ENCODE measurements at regions of chr5 and their contacts with region 1.

Region 1: GRCh38 chr5:15929611-15930263 is 249.9 kb downstream of the MARCHF11 start:
- DNase-seq: peak; percentile 90
- ATAC-seq: peak; percentile 87
- H3K4me3 ChIP-seq: peak overlapping the region; percentile 13
- H3K27ac ChIP-seq: peak overlapping the region; percentile 33; the same call in 1 of the 2 replicates
- H3K4me1 ChIP-seq: peaks cover 15% of the 10 kb centered on the region
- H3K27me3 ChIP-seq: no peaks in the 10 kb centered on the region
- CTCF ChIP-seq: no peak
- POLR2A ChIP-seq: no peak
- RAD21 ChIP-seq: no peak

Region 2: DNA sequence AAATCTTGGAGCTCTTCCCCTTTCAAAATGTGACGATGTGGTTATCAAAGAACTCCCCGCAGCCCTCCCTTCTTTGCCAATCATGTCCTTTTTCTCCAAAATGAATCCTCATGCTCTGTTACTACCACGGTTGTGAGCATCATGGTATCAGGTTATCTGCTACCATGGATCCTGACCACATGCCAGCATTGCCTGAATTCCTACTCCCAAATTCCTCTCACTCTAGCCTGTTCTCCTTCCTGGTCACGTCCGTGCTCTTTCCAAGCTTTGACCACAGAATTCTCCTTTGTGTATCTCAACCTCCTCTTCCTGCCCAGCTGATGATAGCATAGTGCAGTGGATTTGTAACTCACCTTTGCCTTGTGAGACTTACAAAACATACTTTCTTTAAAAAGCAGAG is 489.3 kb before region 1 on chr5:
- CTCF ChIA-PET with region 1: no interaction called
- POLR2A ChIA-PET with region 1: no interaction called
- dilution Hi-C with region 1: no loop called
- in situ Hi-C with region 1: no loop called
- intact Hi-C with region 1: no loop called
- DNase-seq: no peak
- ATAC-seq: no peak
- H3K4me3 ChIP-seq: no peak overlapping the region
- H3K27ac ChIP-seq: no peak overlapping the region
- H3K4me1 ChIP-seq: no peaks in the 10 kb centered on the region
- H3K27me3 ChIP-seq: peaks cover 4% of the 10 kb centered on the region
- CTCF ChIP-seq: no peak
- POLR2A ChIP-seq: no peak
- RAD21 ChIP-seq: no peak

Region 3: DNA sequence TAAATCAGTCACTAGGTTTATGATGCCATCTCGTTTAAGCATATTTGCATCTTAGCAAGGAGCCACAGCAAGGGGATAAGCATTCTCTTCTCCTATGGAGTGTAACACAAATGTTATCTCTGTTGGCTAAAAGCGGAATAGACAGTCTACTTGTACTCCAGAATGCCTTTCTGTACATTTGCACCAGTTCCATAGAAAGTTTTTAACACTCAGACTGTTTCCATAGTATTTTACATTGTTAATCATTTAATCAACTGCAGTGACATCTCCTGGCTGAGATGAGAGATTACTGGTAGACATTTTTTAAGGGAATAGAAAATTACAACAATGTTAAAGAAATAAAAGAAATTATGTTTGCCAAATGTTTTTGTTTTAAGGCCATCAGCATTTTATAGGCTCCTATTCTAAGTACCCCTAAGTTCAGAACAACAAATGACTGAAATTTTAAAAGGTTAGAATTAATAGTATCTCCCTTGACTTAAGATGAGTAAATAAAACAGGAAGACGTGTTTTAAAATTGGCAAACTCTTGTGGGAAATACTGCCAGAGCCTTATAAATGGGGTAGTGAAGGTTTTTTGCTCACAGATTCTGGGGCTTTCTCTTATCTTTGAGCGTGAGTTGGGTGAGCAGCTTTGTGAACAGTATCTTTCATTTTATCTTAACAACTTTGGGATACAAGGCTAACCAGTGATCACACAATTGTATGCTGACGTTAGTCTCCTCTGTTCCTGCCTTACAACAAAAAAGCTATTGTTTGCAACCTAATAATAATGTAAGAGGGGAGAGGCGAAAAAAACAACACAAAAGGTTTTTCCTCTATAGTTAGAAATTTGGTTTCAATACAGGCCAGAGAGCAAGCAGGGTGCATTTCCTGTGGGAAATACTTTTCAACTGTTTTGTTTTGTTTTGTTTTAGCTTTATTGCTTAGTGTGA is 135.4 kb before region 1 on chr5:
- CTCF ChIA-PET with region 1: no interaction called
- POLR2A ChIA-PET with region 1: no interaction called
- dilution Hi-C with region 1: no loop called
- in situ Hi-C with region 1: no loop called
- intact Hi-C with region 1: no loop called
- DNase-seq: peak; percentile 24
- ATAC-seq: no peak
- H3K4me3 ChIP-seq: no peak overlapping the region
- H3K27ac ChIP-seq: no peak overlapping the region
- H3K4me1 ChIP-seq: peaks cover 3% of the 10 kb centered on the region
- H3K27me3 ChIP-seq: no peaks in the 10 kb centered on the region
- CTCF ChIP-seq: peak; percentile 44
- POLR2A ChIP-seq: no peak
- RAD21 ChIP-seq: peak; percentile 45

Region 4: DNA sequence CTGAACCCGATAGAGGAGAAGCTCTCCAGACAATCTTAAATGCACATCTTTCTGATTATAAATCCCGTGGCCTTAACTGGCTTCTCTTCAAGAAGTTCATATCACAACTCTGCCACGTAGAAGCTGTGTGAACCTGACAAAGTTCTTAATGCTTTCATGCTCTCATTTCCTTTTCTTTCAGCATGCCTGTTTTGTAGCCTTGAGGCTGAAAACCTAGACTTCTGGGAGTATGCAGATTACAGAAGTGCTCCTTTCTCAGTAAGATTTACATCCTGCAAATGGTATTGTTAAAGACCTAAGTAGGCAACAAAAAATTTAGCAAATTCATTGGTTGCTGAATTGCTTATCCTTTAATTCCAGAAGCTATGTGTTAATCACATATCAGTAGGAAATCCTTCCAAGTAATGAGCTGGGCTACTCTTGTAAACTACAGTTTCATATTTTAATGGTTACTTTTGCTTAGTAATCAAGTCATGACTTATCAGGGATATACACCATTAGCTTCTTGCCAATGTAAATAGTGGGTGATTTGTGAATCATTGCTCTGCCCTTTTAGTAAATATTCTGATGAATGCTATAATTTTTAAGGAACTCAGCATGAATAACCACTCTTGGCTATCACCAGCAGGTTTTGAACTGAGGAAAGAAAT is 95.0 kb before region 1 on chr5:
- CTCF ChIA-PET with region 1: no interaction called
- POLR2A ChIA-PET with region 1: no interaction called
- dilution Hi-C with region 1: no loop called
- in situ Hi-C with region 1: no loop called
- intact Hi-C with region 1: loop called (anchors 2 kb)
- DNase-seq: peak; percentile 91
- ATAC-seq: peak; percentile 85
- H3K4me3 ChIP-seq: no peak overlapping the region
- H3K27ac ChIP-seq: peak overlapping the region; percentile 37; the same call in 1 of the 2 replicates
- H3K4me1 ChIP-seq: peaks cover 7% of the 10 kb centered on the region
- H3K27me3 ChIP-seq: no peaks in the 10 kb centered on the region
- CTCF ChIP-seq: no peak
- POLR2A ChIP-seq: no peak
- RAD21 ChIP-seq: no peak

Region 5: GRCh38 chr5:15904899-15905830 is 24.6 kb before region 1 on chr5:
- CTCF ChIA-PET with region 1: no interaction called
- POLR2A ChIA-PET with region 1: no interaction called
- dilution Hi-C with region 1: no loop called
- in situ Hi-C with region 1: no loop called
- intact Hi-C with region 1: no loop called
- DNase-seq: no peak
- ATAC-seq: peak; percentile 64
- H3K4me3 ChIP-seq: no peak overlapping the region
- H3K27ac ChIP-seq: no peak overlapping the region
- H3K4me1 ChIP-seq: peaks cover 1% of the 10 kb centered on the region; the same call in 1 of the 2 replicates
- H3K27me3 ChIP-seq: no peaks in the 10 kb centered on the region
- CTCF ChIP-seq: no peak
- POLR2A ChIP-seq: no peak
- RAD21 ChIP-seq: no peak

Measured in IMR-90 (cell line).